GM10248 (cell line): ENCODE measurements at regions of chr1 and their contacts with region 1.

Region 1: DNA sequence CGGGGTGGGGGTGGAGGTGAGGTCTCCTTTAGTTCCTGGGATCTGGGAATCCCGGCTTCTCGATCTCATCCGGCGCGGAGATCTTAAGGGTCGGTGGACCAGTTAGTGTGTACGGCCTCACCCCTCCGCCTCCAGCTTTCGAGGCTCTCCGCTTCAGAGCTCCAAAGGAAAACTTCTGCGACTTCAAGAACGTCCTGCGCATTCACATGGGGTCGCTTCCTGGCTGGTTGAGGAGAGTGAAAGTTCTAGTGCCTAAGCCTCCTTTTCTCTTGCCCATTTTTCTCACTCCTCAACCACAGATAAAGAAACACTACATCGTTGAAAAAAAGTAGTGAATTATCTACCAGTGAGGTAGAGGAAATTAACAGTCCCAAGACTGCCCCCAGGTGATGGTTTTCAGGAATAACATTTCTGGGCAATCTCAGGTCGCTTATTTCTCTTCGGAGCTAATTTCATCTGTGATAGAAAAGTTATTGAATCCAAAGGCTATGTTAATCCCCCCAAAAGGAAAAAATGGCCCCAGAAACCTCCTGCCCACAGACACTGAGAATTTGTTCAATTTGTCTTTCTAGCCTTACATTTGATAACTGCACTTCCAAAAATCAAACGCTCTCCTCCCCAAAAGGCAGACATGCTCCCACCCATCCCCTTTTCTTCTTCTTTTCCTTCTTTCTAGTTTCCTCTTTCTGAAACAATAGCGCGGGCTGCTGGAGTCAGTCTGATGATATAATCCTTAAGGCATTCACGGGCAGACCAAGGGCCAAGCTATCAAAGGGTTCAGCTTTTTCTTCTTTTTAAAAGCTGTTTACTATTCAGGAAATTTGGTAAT is 20.6 kb upstream of the TBX15 start:
- DNase-seq: peak; percentile 67
- CTCF ChIP-seq: peak; percentile 52

Region 2: GRCh38 chr1:118151312-118151937 is 857.3 kb before region 1 on chr1:
- CTCF ChIA-PET with region 1: interaction called, 19 read pairs
- POLR2A ChIA-PET with region 1: no interaction called
- DNase-seq: no peak
- CTCF ChIP-seq: peak; percentile 75

Region 3: GRCh38 chr1:118995312-118996016 is 13.2 kb before region 1 on chr1:
- CTCF ChIA-PET with region 1: interaction called, 27 read pairs
- POLR2A ChIA-PET with region 1: no interaction called
- DNase-seq: no peak
- CTCF ChIP-seq: no peak